MCF 10A (cell line): ENCODE measurements at regions of chr1 and their contacts with region 1.

Region 1: DNA sequence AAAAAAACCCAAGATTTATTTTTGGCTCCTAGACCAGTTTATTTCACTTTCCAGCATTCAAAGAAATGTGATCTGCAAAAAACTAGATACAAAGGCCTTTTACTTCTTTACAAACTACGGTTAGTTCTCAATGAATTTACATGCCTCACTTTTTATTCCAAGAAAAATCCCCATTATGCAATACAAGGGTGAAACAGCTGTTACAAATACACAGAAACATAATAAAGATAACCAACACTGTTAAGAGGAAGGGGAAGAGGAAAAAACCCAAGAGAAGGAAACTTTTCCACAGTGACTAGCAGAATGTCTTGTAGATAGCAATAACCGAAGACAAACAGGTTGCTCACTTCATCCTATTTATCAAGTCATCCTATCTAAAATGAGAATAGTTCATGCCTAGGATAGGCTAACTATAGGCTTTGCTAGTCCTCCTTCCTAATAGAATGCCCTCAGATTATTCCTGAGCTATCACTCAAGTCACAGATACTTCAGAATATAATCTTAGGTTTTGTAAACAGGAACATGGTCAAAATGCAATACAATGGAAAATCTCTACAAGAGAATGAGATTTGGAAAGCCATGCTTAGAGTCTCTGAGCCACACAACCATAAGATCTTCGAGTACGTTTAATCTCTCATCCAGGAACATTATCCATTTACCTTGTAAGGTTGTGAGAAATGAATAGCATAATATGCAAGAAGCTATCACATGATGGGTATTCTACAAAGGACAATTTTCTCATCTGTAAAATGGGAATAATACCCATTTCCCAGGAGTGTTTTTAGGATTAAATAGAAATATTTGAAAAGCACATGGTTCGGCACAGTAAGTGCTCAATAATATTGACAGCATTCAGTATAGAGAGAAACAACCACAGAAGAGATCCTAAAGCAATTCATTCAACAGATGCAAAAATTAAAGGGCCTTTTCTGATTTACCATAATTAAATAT is 5.4 kb downstream of the PNRC2 start:
- DNase-seq: no peak
- H3K4me3 Mint-ChIP-seq: no peak overlapping the region
- H3K27ac Mint-ChIP-seq: peak overlapping the region; percentile 46
- H3K4me1 Mint-ChIP-seq: peaks cover 10% of the 10 kb centered on the region
- H3K27me3 Mint-ChIP-seq: no peaks in the 10 kb centered on the region
- CTCF ChIP-seq: no peak

Region 2: GRCh38 chr1:23951571-23952095 is 13.4 kb before region 1 on chr1:
- CTCF ChIA-PET with region 1: interaction called, 4 read pairs
- POLR2A ChIA-PET with region 1: interaction called, 49 read pairs
- intact Hi-C with region 1: no loop called
- DNase-seq: peak; percentile 95
- H3K4me3 Mint-ChIP-seq: peak overlapping the region; percentile 23
- H3K27ac Mint-ChIP-seq: peak overlapping the region; percentile 90
- H3K4me1 Mint-ChIP-seq: peaks cover 37% of the 10 kb centered on the region
- H3K27me3 Mint-ChIP-seq: no peaks in the 10 kb centered on the region
- CTCF ChIP-seq: no peak

Region 3: GRCh38 chr1:24027838-24028468 is 62.9 kb after region 1 on chr1:
- CTCF ChIA-PET with region 1: interaction called, 14 read pairs
- POLR2A ChIA-PET with region 1: interaction called, 43 read pairs
- intact Hi-C with region 1: no loop called
- DNase-seq: peak; percentile 57
- H3K4me3 Mint-ChIP-seq: no peak overlapping the region
- H3K27ac Mint-ChIP-seq: peak overlapping the region; percentile 40
- H3K4me1 Mint-ChIP-seq: peaks cover 6% of the 10 kb centered on the region
- H3K27me3 Mint-ChIP-seq: no peaks in the 10 kb centered on the region
- CTCF ChIP-seq: peak; percentile 49

Region 4: DNA sequence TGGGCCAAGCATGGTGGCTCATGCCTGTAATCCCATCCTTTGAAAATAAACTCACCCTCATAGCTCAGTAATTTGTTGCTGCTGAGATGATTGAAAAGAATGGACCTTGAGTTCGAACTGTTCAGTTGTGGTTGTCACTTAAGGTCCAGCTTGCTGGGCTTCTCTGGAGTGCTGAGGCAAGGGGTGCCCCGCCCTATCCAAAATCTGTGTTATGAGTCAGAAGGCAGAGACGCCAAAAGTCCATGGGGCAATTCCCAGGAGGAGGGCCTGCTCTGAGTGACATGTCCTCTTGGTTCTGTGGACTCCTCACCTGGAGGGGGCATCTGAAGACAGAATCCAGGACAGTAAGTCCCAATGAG is 82.0 kb after region 1 on chr1:
- CTCF ChIA-PET with region 1: no interaction called
- POLR2A ChIA-PET with region 1: interaction called, 20 read pairs
- intact Hi-C with region 1: loop called (anchors 5 kb)
- DNase-seq: peak; percentile 94
- H3K4me3 Mint-ChIP-seq: peak overlapping the region; percentile 44
- H3K27ac Mint-ChIP-seq: peak overlapping the region; percentile 68
- H3K4me1 Mint-ChIP-seq: peaks cover 24% of the 10 kb centered on the region
- H3K27me3 Mint-ChIP-seq: no peaks in the 10 kb centered on the region
- CTCF ChIP-seq: no peak